ENCODE measurements at regions of chr4 and their contacts with region 1.

Region 1: GRCh38 chr4:166165829-166166420 is 292.9 kb downstream of the TLL1 start:
- DNase-seq: no peak
- H3K4me3 ChIP-seq: no peak overlapping the region
- H3K27ac ChIP-seq: no peak overlapping the region
- H3K4me1 ChIP-seq: no peaks in the 10 kb centered on the region
- H3K27me3 ChIP-seq: no peaks in the 10 kb centered on the region
- CTCF ChIP-seq: peak; percentile 21 to 65 (median 54)
- POLR2A ChIP-seq: no peak

Region 2: DNA sequence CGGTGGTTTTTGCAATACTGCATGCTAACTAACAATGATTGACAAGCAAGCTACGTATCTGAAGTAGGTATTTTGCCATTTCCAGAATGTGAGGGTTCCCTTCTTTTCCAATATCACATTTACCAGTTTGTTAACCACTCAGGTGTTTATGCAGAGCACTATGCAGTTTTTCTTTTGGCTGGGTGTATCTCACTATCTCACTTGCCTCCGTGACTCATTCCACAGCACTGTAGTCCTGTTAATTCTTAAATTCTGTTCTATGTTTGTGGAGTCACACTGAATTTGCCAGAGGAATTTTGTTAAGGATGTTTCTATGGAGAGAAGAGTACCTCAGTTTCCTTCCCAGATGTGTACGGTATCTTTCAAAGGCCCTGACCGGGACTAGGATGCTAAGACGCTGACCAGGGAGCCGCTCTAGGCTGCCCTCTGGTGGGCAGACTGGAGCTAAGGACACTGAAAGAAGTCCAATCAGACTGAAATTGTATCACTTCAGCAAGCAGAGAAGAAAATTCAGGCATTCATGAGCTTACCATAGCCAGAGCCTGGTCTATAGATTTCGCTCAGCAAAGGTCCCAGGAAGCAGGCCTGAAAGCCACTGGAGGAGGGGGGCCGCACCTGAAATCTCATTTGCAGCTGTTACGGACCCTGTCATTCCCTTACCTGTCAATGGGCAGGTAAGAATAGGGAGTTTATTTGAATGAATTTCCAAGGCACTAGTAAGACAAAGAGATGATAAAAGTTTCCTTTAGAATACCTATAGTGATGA is 1456.7 kb after region 1 on chr4:
- intact Hi-C with region 1: loop called (anchors 5 kb)
- DNase-seq: peak; percentile 13
- H3K4me3 ChIP-seq: no peak overlapping the region
- H3K27ac ChIP-seq: no peak overlapping the region
- H3K4me1 ChIP-seq: no peaks in the 10 kb centered on the region
- H3K27me3 ChIP-seq: no peaks in the 10 kb centered on the region
- CTCF ChIP-seq: peak in 3 of 4 experiments; percentile 42 to 45 (median 45)
- POLR2A ChIP-seq: no peak

Region 3: DNA sequence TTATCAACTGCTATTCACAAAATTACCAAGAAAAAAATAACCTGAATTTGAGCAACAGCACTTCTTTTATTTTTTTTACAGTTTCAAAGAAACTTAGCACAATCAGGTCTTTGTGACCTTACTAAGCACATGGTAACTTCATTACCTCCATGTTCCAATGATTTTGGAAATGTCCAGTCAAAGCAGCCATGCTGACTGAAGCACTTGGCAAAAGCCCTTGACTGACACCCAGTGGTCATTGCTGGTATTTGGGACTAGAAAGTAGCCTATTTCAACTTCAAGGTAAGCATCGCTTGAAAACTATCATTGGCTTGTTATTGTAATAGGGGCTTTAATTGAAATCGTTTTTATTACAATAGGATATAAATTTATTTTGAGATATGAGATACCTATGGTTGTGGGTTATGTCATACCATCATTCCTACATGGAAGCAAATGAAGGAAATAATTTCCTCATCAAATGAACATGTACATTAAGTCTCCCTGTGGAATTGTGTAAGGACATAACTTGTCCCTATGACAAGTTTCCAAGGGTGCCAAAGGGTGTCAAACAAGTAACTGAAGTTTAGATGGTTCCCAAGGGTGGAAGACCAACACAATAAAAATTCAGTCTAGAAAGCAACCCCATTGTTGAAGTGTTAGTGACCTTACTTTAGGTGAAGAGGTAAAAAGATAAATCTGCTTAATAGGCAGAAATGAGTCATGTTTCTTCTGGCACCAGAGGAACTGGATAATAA is 1911.2 kb after region 1 on chr4:
- intact Hi-C with region 1: loop called (anchors 10 kb)
- DNase-seq: peak; percentile 61
- H3K4me3 ChIP-seq: no peak overlapping the region
- H3K27ac ChIP-seq: no peak overlapping the region
- H3K4me1 ChIP-seq: no peaks in the 10 kb centered on the region
- H3K27me3 ChIP-seq: no peaks in the 10 kb centered on the region
- CTCF ChIP-seq: peak; percentile 44 to 79 (median 68)
- POLR2A ChIP-seq: no peak

Region 4: DNA sequence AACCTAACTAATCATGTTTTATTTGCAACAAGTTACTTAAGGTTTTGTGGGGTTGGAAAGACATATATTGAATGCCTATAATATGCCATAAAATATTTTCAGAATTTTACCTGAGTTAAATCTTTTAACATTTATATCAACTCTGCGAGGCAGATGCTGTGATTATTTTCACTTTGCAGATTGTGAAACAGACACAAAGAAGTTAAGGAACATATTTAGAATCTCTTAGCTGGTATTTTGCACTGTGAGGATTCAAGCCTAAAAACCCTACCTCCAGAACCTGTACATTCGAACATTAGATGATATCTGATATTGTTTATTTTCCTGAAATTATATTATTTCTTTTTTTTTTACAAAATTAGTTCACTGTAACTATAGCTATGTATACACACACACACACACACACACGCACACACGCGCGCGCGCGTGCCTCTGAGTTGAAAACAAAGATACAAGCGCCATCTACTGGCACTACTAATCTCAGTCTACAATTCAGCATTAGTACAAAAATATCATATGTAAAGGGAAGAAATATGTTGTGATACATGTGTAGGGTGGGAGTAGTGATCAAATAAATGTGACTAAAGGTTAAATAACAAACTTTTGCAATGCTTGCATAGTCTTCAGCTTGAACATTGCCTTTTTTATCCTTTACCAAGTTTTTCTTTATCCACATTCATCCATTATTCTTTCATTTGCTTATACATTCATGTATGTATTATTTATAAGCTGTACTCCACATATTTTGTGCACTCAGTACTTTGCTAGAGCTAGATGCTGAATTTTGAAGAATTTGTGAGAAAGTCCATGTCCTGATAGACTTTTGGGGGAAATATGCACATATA is 1987.9 kb after region 1 on chr4:
- intact Hi-C with region 1: loop called (anchors 10 kb)
- DNase-seq: peak; percentile 73
- H3K4me3 ChIP-seq: no peak overlapping the region
- H3K27ac ChIP-seq: no peak overlapping the region
- H3K4me1 ChIP-seq: no peaks in the 10 kb centered on the region
- H3K27me3 ChIP-seq: no peaks in the 10 kb centered on the region
- CTCF ChIP-seq: peak in 3 of 4 experiments; percentile 53 to 61 (median 58)
- POLR2A ChIP-seq: no peak

Measured in prostate gland (tissue), 2 donors.